ENCODE measurements at regions of chr10 and their contacts with region 1.

Region 1: GRCh38 chr10:119199231-119199992 is 8.0 kb upstream of the GRK5 start:
- DNase-seq: peak; percentile 53
- H3K4me3 Mint-ChIP-seq: no peak overlapping the region
- H3K27ac Mint-ChIP-seq: no peak overlapping the region
- H3K4me1 Mint-ChIP-seq: peaks cover 22% of the 10 kb centered on the region
- H3K27me3 Mint-ChIP-seq: peaks cover 2% of the 10 kb centered on the region

Region 2: GRCh38 chr10:119022846-119023552 is 176.4 kb before region 1 on chr10:
- CTCF ChIA-PET with region 1: no interaction called
- POLR2A ChIA-PET with region 1: no interaction called
- DNase-seq: no peak
- H3K4me3 Mint-ChIP-seq: no peak overlapping the region
- H3K27ac Mint-ChIP-seq: no peak overlapping the region
- H3K4me1 Mint-ChIP-seq: no peaks in the 10 kb centered on the region
- H3K27me3 Mint-ChIP-seq: peaks cover 13% of the 10 kb centered on the region

Region 3: DNA sequence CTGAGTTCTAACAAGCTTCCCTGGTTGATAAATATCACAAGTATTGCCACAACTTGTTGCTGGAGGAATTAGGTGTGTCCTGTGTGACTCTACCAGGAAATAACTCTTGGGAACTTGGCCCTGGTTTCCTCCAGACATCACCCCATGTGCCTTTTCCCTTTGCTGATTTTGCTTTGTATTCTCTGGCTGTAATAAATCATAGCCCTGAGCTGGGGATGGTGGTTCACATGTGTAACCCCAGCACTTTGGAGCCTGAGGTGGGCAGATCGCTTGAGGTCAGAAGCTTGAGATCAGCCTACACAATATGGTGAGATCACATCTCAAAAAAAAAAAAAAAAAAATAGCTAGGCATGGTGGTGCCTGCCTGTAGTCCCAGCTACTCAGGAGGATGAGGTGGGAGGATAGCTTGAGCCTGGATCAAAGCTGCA is 98.6 kb before region 1 on chr10:
- CTCF ChIA-PET with region 1: no interaction called
- POLR2A ChIA-PET with region 1: no interaction called
- DNase-seq: no peak
- H3K4me3 Mint-ChIP-seq: no peak overlapping the region
- H3K27ac Mint-ChIP-seq: peak overlapping the region; percentile 60
- H3K4me1 Mint-ChIP-seq: peaks cover 43% of the 10 kb centered on the region
- H3K27me3 Mint-ChIP-seq: no peaks in the 10 kb centered on the region

Region 4: GRCh38 chr10:119235356-119235755 is 35.9 kb after region 1 on chr10:
- CTCF ChIA-PET with region 1: no interaction called
- POLR2A ChIA-PET with region 1: no interaction called
- DNase-seq: no peak
- H3K4me3 Mint-ChIP-seq: no peak overlapping the region
- H3K27ac Mint-ChIP-seq: no peak overlapping the region
- H3K4me1 Mint-ChIP-seq: peaks cover 38% of the 10 kb centered on the region
- H3K27me3 Mint-ChIP-seq: no peaks in the 10 kb centered on the region

Region 5: GRCh38 chr10:119416855-119417254 is 217.4 kb after region 1 on chr10:
- CTCF ChIA-PET with region 1: interaction called, 49 read pairs
- POLR2A ChIA-PET with region 1: interaction called, 4 read pairs
- DNase-seq: peak; percentile 77
- H3K4me3 Mint-ChIP-seq: no peak overlapping the region
- H3K27ac Mint-ChIP-seq: no peak overlapping the region
- H3K4me1 Mint-ChIP-seq: no peaks in the 10 kb centered on the region
- H3K27me3 Mint-ChIP-seq: no peaks in the 10 kb centered on the region

Region 6: DNA sequence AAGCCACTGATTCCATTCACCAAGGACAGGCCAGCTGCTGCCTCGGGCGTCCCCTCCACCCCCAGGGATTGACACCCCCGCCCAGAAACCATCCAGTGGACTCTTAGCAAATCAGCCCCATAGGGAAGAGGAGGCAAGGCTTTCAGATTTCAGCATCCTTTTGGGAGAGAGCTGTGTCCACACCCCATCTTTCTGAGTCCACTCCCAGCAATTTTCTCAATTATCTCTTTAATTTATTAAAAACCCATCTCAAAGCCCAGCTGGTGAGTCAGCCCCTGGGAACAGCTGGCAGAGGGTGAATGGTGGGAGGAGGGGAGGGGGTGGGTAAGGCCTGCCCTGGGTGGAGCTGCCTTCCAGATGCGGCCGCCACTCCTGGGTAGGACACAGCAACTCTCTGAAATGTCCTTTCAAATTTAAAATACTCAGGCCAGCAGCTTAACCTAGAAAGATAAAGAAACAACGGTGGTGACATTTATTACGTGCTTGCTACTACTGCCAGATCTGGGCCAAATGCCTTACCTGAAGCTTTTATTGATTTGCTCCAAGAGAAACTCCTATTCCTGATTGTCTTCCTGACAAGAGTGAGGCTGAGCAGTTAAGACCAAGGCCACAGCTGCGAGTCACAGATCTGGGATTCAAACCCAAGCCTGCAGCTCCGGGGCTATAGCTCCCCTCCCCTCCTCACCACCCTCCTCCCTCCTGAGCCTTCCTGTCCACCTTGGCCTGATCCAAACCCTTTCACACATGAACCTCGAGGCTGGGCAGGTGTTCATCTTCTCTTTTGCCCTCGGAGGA is 222.7 kb after region 1 on chr10:
- CTCF ChIA-PET with region 1: interaction called, 49 read pairs
- POLR2A ChIA-PET with region 1: no interaction called
- DNase-seq: no peak
- H3K4me3 Mint-ChIP-seq: no peak overlapping the region
- H3K27ac Mint-ChIP-seq: no peak overlapping the region
- H3K4me1 Mint-ChIP-seq: no peaks in the 10 kb centered on the region
- H3K27me3 Mint-ChIP-seq: no peaks in the 10 kb centered on the region

Region 7: DNA sequence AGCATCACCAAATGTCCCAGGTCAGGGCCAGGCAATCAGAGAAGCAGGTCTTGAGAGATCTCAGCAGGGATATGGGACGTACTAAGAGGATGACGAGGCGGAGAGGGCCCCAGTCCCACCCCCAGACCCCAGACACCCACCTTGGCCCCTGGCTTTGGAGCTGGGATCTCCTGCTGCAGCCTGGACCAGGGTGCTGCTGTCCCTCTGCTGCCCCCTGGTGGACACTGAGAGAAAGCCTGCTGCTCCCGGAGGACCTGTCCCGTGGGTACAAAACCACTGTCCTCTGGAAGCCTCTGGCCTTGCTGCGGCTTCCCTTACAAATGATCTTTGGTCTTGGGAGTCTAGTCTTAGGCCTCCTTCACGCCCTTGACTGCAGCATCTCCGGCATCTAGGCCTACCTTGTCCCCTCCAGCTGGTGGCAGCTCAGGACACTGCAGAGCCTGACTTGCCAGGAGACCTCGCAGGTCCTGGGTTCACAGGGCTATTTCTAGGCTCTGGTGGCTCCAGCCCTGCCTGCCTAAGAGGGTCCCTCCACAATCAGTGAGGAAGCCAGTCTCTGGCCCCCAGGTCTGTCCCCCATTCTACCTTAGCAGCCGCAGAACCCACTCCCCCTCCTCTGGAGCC is 246.0 kb after region 1 on chr10:
- CTCF ChIA-PET with region 1: interaction called, 58 read pairs
- POLR2A ChIA-PET with region 1: interaction called, 3 read pairs
- DNase-seq: peak; percentile 85
- H3K4me3 Mint-ChIP-seq: no peak overlapping the region
- H3K27ac Mint-ChIP-seq: no peak overlapping the region
- H3K4me1 Mint-ChIP-seq: peaks cover 15% of the 10 kb centered on the region
- H3K27me3 Mint-ChIP-seq: no peaks in the 10 kb centered on the region

Measured in activated CD4-positive, alpha-beta memory T cell treated with anti-CD3 and anti-CD28 coated beads, Interleukin-2, amount 10 ng/mL, durations not matched to agents 7 days and 5 days (primary cell).